ENCODE measurements at regions of chr4 and their contacts with region 1.

Region 1: GRCh38 chr4:106266201-106266600 is 49.8 kb downstream of the TBCK start:
- DNase-seq: peak; percentile 46
- H3K4me3 ChIP-seq: no peak overlapping the region
- H3K27ac ChIP-seq: no peak overlapping the region
- H3K4me1 ChIP-seq: no peaks in the 10 kb centered on the region
- CTCF ChIP-seq: peak; percentile 83

Region 2: GRCh38 chr4:106010761-106011160 is 255.4 kb before region 1 on chr4:
- CTCF ChIA-PET with region 1: no interaction called
- POLR2A ChIA-PET with region 1: no interaction called
- intact Hi-C with region 1: no loop called
- DNase-seq: no peak
- H3K4me3 ChIP-seq: no peak overlapping the region
- H3K27ac ChIP-seq: no peak overlapping the region
- H3K4me1 ChIP-seq: no peaks in the 10 kb centered on the region
- CTCF ChIP-seq: no peak

Region 3: DNA sequence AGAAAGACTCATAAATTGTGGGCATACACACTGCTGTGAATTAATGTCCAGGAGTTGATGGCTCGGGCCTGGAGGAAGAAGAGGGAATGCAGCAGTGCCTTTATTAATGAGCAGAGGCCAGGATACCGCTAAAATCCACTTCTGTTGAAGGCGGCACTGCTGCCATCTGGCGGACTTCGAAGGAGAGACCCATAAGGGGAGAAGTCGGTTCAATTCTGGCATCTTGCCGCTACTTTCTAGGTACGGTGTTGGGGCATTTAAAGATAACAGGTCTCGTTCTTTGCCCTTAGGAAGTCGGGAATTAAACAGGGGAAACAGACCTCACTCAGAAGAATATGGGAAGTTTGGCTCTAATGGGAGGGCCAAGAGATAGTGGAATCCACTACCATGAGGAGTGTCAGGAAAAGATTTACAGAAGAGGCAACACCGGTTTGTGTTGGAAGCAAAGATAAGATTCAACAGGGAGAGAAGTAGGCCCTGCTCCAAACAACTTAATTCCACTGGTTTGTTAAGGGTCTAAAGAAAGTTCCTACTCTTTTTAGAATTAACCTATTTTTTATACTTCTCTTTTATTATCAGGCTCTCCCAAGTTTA is 236.0 kb after region 1 on chr4:
- CTCF ChIA-PET with region 1: no interaction called
- POLR2A ChIA-PET with region 1: interaction called, 3 read pairs
- intact Hi-C with region 1: loop called (anchors 1 kb)
- DNase-seq: peak; percentile 57
- H3K4me3 ChIP-seq: no peak overlapping the region
- H3K27ac ChIP-seq: no peak overlapping the region
- H3K4me1 ChIP-seq: no peaks in the 10 kb centered on the region
- CTCF ChIP-seq: peak; percentile 83

Region 4: GRCh38 chr4:106898621-106899230 is 632.5 kb after region 1 on chr4:
- CTCF ChIA-PET with region 1: no interaction called
- POLR2A ChIA-PET with region 1: no interaction called
- intact Hi-C with region 1: loop called (anchors 10 kb)
- DNase-seq: peak; percentile 51
- H3K4me3 ChIP-seq: no peak overlapping the region
- H3K27ac ChIP-seq: no peak overlapping the region
- H3K4me1 ChIP-seq: no peaks in the 10 kb centered on the region
- CTCF ChIP-seq: peak; percentile 96

Measured in OCI-LY7 (cell line).